ENCODE measurements at regions of chr12 and their contacts with region 1.

Region 1: GRCh38 chr12:16034136-16034817 is 123.1 kb downstream of the DERA start:
- DNase-seq: no peak
- ATAC-seq: no peak
- H3K4me3 ChIP-seq: no peak overlapping the region
- H3K27ac ChIP-seq: no peak overlapping the region
- H3K4me1 ChIP-seq: no peaks in the 10 kb centered on the region
- H3K27me3 ChIP-seq: no peaks in the 10 kb centered on the region
- CTCF ChIP-seq: no peak

Region 2: DNA sequence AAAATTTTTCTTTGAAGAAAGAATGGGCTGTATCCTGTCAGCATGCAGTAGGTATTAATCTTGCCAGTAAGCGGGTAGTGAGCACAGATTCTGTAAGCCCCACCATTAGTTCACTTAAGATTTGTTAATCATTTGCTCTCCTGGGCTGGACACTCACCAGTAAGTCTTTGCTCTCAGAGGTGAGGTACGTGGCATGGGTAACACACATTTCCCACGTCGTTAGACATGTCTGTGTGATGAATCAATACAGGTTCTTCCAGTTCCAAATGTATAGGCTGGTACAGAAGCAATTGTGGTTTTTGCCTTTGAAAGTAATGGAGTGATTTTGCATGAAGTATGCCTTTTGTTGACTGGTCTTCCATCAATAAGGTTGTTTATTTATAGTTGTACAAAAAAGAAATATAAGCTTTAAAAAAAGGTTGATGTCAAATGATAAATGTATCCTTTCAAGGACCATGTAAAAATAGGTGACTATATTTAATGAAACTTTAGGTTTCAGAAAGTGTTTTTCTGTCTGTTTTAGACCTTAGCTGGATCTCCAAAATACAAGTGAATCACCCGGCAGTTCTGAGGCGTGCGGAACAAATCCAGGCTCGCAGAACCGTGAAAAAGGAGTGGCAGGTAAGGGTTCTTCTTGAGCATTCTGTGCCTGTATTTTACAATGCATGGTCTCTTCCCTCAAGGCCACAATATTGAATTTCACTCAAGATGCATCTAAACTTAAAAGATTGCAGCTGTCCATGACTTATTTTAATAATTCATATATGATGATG is 77.7 kb before region 1 on chr12:
- intact Hi-C with region 1: no loop called
- DNase-seq: no peak
- ATAC-seq: no peak
- H3K4me3 ChIP-seq: no peak overlapping the region
- H3K27ac ChIP-seq: no peak overlapping the region
- H3K4me1 ChIP-seq: peaks cover 0 to 5% (median 0%) of the 10 kb centered on the region in 9 donors
- H3K27me3 ChIP-seq: no peaks in the 10 kb centered on the region
- CTCF ChIP-seq: no peak

Region 3: DNA sequence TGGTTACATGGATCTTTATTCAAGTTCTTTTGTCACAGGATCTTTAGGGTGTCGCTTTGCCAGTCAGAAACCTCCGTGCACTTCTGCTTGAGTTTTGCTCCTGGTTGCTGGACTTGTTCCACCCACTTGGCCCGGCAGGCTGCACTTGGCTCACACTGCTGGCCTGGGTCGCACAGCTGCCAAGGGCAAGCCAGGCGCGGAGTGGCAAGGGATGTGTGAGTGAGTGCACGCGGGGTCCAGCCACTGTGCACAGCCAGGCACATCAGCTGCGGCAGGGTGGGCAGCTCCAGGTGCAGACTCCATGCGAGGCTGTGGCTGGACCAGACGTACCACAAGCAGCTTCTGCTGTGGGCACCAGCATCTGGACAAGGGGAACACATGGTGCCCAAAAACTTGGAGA is 46.6 kb before region 1 on chr12:
- intact Hi-C with region 1: loop called in 1 of 10 experiments (anchors 2 kb)
- DNase-seq: peak; percentile 69 to 74
- ATAC-seq: peak; percentile 91 to 99 (median 98)
- H3K4me3 ChIP-seq: no peak overlapping the region
- H3K27ac ChIP-seq: no peak overlapping the region
- H3K4me1 ChIP-seq: peaks cover 0 to 19% (median 8%) of the 10 kb centered on the region in 9 donors
- H3K27me3 ChIP-seq: no peaks in the 10 kb centered on the region
- CTCF ChIP-seq: no peak

Measured in heart right ventricle (tissue), 16 donors.